CD4-positive, alpha-beta memory T cell (primary cell): ENCODE measurements at regions of chr19 and their contacts with region 1.

Region 1: GRCh38 chr19:48321622-48322591 is 3.4 kb upstream of the EMP3 start:
- DNase-seq: peak; percentile 99 to 100 (median 100)
- H3K4me3 ChIP-seq: peak overlapping the region; percentile 83 to 87
- H3K4me3 Mint-ChIP-seq: peak overlapping the region; percentile 91 to 95 (median 92)
- H3K27ac ChIP-seq: peak overlapping the region; percentile 100
- H3K27ac Mint-ChIP-seq: peak overlapping the region; percentile 98 to 100 (median 100)
- H3K4me1 ChIP-seq: peaks cover 55% of the 10 kb centered on the region
- H3K4me1 Mint-ChIP-seq: peaks cover 32 to 71% (median 49%) of the 10 kb centered on the region in 4 donors
- H3K27me3 ChIP-seq: no peaks in the 10 kb centered on the region
- H3K27me3 Mint-ChIP-seq: no peaks in the 10 kb centered on the region

Region 2: DNA sequence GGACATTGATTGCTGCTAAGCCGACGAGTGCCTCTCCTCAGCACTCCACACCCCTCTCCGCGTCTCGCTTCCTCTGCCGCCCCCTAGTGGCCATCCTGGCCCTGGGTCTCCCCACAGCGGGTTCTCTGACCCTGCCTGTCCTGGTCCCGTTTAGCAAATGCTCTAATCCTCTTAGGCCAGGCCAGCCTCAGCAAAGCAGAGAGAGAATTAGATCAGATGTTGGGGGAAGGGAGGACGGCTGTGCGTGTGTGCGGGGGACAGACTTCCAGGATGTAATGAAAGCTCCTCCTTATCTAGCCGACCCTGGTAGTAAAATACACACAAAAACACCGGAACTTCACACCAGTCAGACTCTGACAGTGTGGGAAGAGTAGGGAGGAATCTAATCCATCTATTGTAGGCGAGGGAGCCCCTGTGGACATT is 458.4 kb before region 1 on chr19:
- CTCF ChIA-PET with region 1: no interaction called
- POLR2A ChIA-PET with region 1: no interaction called
- intact Hi-C with region 1: no loop called
- DNase-seq: peak; percentile 62 to 71 (median 68)
- H3K4me3 ChIP-seq: no peak overlapping the region
- H3K4me3 Mint-ChIP-seq: no peak overlapping the region
- H3K27ac ChIP-seq: no peak overlapping the region
- H3K27ac Mint-ChIP-seq: no peak overlapping the region
- H3K4me1 ChIP-seq: no peaks in the 10 kb centered on the region
- H3K4me1 Mint-ChIP-seq: peaks cover 0 to 5% (median 0%) of the 10 kb centered on the region in 4 donors
- H3K27me3 ChIP-seq: no peaks in the 10 kb centered on the region
- H3K27me3 Mint-ChIP-seq: peaks cover 6 to 14% of the 10 kb centered on the region in 2 donors

Region 3: GRCh38 chr19:48170038-48170812 is 151.7 kb before region 1 on chr19 and contains the starts of genes LIG1 and ZSWIM9:
- CTCF ChIA-PET with region 1: no interaction called
- POLR2A ChIA-PET with region 1: interaction called, 6 read pairs
- intact Hi-C with region 1: loop called (anchors 1 kb)
- DNase-seq: peak; percentile 90 to 97 (median 93)
- H3K4me3 ChIP-seq: peak within 1 kb of the TSS; percentile 65 to 97
- H3K4me3 Mint-ChIP-seq: peak within 1 kb of the TSS; percentile 96 to 99 (median 97)
- H3K27ac ChIP-seq: peak within 1 kb of the TSS; percentile 86
- H3K27ac Mint-ChIP-seq: peak within 1 kb of the TSS; percentile 93 to 99 (median 98)
- H3K4me1 ChIP-seq: peaks cover 24% of the 10 kb centered on the region
- H3K4me1 Mint-ChIP-seq: peaks cover 18 to 32% (median 23%) of the 10 kb centered on the region in 4 donors
- H3K27me3 ChIP-seq: no peaks in the 10 kb centered on the region
- H3K27me3 Mint-ChIP-seq: no peaks in the 10 kb centered on the region
- total RNA-seq, gene LIG1: 118 to 124 TPM
- total RNA-seq, gene ZSWIM9: 10.5 to 11.8 TPM

Region 4: DNA sequence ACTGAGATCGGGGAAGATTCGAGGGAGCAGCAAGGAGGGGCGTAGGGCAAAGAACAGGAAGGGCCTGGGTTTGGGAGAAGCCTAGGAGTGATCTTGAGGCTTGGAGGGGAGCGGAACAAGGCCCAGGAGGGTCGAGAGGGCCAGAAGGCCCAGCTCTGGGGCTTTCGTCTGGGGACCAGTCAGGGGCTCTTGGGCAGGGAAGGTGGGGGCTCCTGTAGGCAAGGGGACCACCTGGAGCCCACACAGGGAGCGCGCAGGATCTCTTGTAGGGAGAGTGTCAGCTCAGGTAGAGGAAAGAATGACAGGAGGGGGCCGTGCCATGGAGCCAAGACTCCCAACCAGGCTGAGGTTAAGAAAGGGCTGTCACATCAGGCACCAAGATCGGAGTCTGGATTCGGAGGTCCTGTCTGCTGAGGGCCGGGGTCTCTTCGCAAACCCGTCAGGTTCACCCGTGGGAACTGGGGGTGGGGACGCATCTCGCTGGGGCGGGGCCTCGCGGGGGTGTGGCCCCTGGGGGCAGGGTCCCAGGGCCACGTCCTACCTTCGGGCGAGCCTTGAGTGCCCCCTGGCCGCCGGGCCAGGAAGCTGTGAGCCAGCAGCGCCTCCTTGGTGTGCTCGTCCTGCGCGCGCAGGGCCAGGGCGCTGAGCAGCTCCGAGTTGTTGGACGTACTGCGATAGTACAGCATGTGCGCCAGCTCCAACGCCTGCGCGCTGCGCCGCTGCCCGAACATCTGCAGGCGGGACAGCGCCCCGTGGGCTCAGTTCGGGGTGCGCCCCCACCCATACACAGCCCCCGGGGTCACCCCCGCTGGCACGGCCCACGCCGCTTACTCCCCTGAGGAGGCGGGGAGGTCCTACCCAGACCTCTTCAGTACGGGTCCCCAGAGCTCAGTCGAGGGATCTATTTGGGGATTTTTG is 11.8 kb after region 1 on chr19:
- CTCF ChIA-PET with region 1: interaction called, 278 read pairs
- POLR2A ChIA-PET with region 1: interaction called, 516 read pairs
- intact Hi-C with region 1: loop called (anchors 1 kb)
- DNase-seq: peak; percentile 92 to 94 (median 93)
- H3K4me3 ChIP-seq: peak overlapping the region; percentile 81 to 93
- H3K4me3 Mint-ChIP-seq: peak overlapping the region; percentile 88 to 97 (median 94)
- H3K27ac ChIP-seq: peak overlapping the region; percentile 99
- H3K27ac Mint-ChIP-seq: peak overlapping the region; percentile 94 to 99 (median 98)
- H3K4me1 ChIP-seq: peaks cover 48% of the 10 kb centered on the region
- H3K4me1 Mint-ChIP-seq: peaks cover 23 to 60% (median 36%) of the 10 kb centered on the region in 4 donors
- H3K27me3 ChIP-seq: no peaks in the 10 kb centered on the region
- H3K27me3 Mint-ChIP-seq: no peaks in the 10 kb centered on the region

Region 5: DNA sequence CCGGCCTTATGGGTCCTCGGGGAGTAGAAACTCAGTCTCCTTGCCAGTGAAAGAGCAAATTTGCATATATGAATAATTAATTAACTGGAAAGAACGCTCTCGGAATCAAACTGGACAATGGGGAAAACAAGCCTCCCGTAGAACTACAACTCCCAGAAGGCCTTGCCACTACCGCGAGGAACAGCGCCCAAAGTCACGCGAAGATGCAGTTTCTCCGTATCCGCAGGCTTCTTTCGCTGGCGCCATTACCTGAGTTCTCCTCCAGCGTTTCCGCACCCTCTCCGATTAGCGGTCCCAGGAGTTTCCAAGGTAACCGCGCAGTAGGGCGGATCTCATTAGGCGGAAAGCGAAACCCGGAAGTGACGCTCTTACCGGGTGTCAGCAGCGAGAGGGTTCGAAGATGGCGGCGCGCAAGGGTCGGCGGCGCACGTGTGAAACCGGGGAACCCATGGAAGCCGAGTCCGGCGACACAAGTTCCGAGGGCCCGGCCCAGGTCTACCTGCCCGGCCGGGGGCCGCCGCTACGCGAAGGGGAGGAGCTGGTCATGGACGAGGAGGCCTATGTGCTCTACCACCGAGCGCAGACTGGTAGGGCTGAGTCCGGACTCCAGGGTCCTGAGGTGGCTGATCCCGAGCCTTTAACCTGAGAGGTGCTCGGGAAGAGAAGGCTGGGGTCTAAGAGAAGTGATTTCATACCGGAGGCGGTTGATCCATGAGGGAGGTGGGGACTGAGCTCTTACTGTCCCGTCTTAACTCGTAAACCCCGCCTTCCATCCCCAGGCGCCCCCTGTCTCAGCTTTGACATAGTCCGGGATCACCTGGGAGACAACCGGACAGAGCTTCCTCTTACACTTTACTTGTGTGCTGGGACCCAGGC is 123.9 kb after region 1 on chr19 and contains the start of gene GRWD1:
- CTCF ChIA-PET with region 1: no interaction called
- POLR2A ChIA-PET with region 1: interaction called, 3 read pairs
- intact Hi-C with region 1: loop called (anchors 2 kb)
- DNase-seq: peak; percentile 91 to 99 (median 96)
- H3K4me3 ChIP-seq: peak within 1 kb of the TSS; percentile 75 to 85
- H3K4me3 Mint-ChIP-seq: peak within 1 kb of the TSS; percentile 86 to 94 (median 90)
- H3K27ac ChIP-seq: peak within 1 kb of the TSS; percentile 83
- H3K27ac Mint-ChIP-seq: peak within 1 kb of the TSS; percentile 88 to 98 (median 94)
- H3K4me1 ChIP-seq: peaks cover 25% of the 10 kb centered on the region
- H3K4me1 Mint-ChIP-seq: peaks cover 19 to 48% (median 32%) of the 10 kb centered on the region in 4 donors
- H3K27me3 ChIP-seq: no peaks in the 10 kb centered on the region
- H3K27me3 Mint-ChIP-seq: peaks cover 10 to 17% of the 10 kb centered on the region in 2 donors
- total RNA-seq, gene GRWD1: 36.2 to 39.0 TPM

Region 6: GRCh38 chr19:48618916-48619691 is 297.2 kb after region 1 on chr19 and contains the starts of genes RPL18 and SPHK2:
- CTCF ChIA-PET with region 1: no interaction called
- POLR2A ChIA-PET with region 1: interaction called, 10 read pairs
- intact Hi-C with region 1: no loop called
- DNase-seq: peak; percentile 94 to 97 (median 96)
- H3K4me3 ChIP-seq: peak within 1 kb of the TSS; percentile 76 to 81
- H3K4me3 Mint-ChIP-seq: peak within 1 kb of the TSS; percentile 95 to 98 (median 96)
- H3K27ac ChIP-seq: peak within 1 kb of the TSS; percentile 88
- H3K27ac Mint-ChIP-seq: peak within 1 kb of the TSS; percentile 97 to 99 (median 98)
- H3K4me1 ChIP-seq: peaks cover 50% of the 10 kb centered on the region
- H3K4me1 Mint-ChIP-seq: peaks cover 27 to 74% (median 49%) of the 10 kb centered on the region in 4 donors
- H3K27me3 ChIP-seq: no peaks in the 10 kb centered on the region
- H3K27me3 Mint-ChIP-seq: no peaks in the 10 kb centered on the region
- total RNA-seq, gene RPL18: 2,357 to 2,448 TPM
- total RNA-seq, gene SPHK2: 25.0 to 29.1 TPM

Region 7: GRCh38 chr19:49869441-49870176 is 1547.7 kb after region 1 on chr19:
- CTCF ChIA-PET with region 1: no interaction called
- POLR2A ChIA-PET with region 1: no interaction called
- intact Hi-C with region 1: loop called (anchors 5 kb)
- DNase-seq: peak; percentile 92 to 94 (median 92)
- H3K4me3 ChIP-seq: peak overlapping the region; percentile 47 to 70
- H3K4me3 Mint-ChIP-seq: peak overlapping the region in 3 of 8 donors; percentile 78 to 87 (median 81)
- H3K27ac ChIP-seq: peak overlapping the region; percentile 66
- H3K27ac Mint-ChIP-seq: peak overlapping the region in 5 of 7 donors; percentile 88 to 94 (median 92)
- H3K4me1 ChIP-seq: peaks cover 53% of the 10 kb centered on the region
- H3K4me1 Mint-ChIP-seq: peaks cover 17 to 43% (median 22%) of the 10 kb centered on the region in 4 donors
- H3K27me3 ChIP-seq: no peaks in the 10 kb centered on the region
- H3K27me3 Mint-ChIP-seq: no peaks in the 10 kb centered on the region